Spleen (tissue), 13 donors: ENCODE measurements at regions of chr1 and their contacts with region 1.

Region 1: DNA sequence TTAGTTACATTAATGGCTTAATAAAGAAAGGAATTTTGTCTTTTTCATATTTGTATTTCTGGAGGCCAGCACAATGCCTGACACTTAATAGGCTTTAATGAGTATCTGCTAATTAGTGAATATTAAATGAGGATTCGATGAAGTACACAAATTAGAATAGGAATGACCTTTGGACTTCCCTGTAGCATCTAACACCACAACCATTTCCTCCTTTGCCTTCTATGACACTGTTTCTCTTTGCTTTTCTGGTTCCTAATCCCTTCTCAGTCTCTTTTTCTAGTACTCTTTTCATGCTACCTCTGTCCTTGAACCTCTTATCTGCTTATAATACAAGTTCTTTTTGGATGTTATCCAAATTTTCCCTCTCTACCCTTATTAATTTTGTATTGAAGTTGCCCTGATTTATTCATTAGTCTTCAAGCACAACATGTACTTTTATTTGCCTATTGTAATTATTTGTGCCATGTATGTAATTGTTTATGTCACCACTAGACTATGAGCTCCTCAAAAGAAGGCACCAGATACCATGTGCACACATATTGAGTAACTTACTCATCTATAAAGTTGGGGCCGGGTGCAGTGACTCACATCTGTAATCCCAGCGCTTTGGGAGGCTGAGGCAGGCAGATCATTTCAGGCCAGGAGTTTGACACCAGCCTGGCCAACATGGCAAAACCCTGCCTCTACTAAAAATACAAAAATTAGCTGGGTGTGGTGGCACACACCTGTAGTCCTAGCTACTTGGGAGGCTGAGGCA is 23.8 kb downstream of the RPS27 start:
- DNase-seq: no peak
- H3K4me3 ChIP-seq: no peak overlapping the region
- H3K27ac ChIP-seq: no peak overlapping the region
- H3K4me1 ChIP-seq: no peaks in the 10 kb centered on the region
- H3K27me3 ChIP-seq: no peaks in the 10 kb centered on the region
- CTCF ChIP-seq: no peak
- POLR2A ChIP-seq: no peak

Region 2: DNA sequence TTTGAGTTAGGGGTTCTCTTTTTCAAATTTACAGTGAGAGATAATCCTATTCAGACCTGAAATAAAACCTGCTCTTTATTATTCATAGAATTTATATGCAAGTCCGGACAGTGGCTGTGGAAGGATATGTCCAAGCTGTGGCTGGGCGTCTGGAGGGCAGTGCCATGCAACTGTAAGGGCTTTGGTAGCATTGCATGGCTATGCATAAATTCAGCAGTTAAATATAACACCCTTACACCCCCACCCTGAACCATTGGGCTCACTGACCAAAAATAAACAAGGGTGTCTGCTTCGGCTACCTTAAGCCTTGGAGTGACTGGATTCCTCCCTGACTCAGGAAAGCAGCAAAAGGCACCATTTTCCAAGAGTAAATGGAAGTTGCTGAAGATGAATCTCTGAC is 375.1 kb before region 1 on chr1:
- intact Hi-C with region 1: no loop called
- DNase-seq: no peak
- H3K4me3 ChIP-seq: no peak overlapping the region
- H3K27ac ChIP-seq: no peak overlapping the region
- H3K4me1 ChIP-seq: peaks cover 18 to 93% (median 44%) of the 10 kb centered on the region in 6 donors
- H3K27me3 ChIP-seq: no peaks in the 10 kb centered on the region
- CTCF ChIP-seq: no peak
- POLR2A ChIP-seq: no peak

Region 3: DNA sequence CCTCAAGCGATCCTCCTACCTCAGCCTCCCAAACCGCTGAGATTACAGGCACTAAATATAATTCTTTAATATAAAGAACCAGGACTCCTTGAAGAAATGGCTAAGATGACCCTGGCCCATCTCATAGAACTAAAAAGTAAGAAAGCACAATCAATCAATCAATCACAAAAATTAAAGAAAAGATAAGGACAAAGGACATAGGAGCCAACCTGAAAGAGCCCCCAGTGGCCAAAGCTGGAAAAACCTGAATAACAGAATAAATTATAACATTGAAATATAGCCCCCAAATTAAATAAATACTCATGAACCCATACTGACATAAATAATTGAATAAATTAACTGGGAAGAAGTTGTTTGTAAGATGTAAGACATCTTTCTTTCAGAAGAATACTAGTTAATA is 131.7 kb after region 1 on chr1:
- intact Hi-C with region 1: loop called (anchors 10 kb)
- DNase-seq: no peak
- H3K4me3 ChIP-seq: no peak overlapping the region
- H3K27ac ChIP-seq: no peak overlapping the region
- H3K4me1 ChIP-seq: peaks cover 0 to 14% (median 6%) of the 10 kb centered on the region in 6 donors
- H3K27me3 ChIP-seq: no peaks in the 10 kb centered on the region
- CTCF ChIP-seq: peak in 5 of 11 experiments; percentile 15 to 32 (median 26)
- POLR2A ChIP-seq: no peak